HepG2 (cell line): ENCODE measurements at regions of chr9 and their contacts with region 1.

Region 1: GRCh38 chr9:122904823-122905710 is at the start of gene RC3H2:
- DNase-seq: peak; percentile 99
- ATAC-seq: peak; percentile 94
- H3K4me3 ChIP-seq: peak within 1 kb of the TSS; percentile 63 to 98 (median 95)
- H3K27ac ChIP-seq: peak within 1 kb of the TSS; percentile 90
- H3K4me1 ChIP-seq: peaks cover 19% of the 10 kb centered on the region
- H3K27me3 ChIP-seq: no peaks in the 10 kb centered on the region; a peak in 1 of 5 replicates
- CTCF ChIP-seq: no peak
- EP300 ChIP-seq: no peak; a peak in 1 of 4 replicates
- POLR2A ChIP-seq: peak; percentile 93 to 96
- RAD21 ChIP-seq: no peak
- total RNA-seq, gene RC3H2: 36.4 and 42.5 TPM in 2 replicates

Region 2: DNA sequence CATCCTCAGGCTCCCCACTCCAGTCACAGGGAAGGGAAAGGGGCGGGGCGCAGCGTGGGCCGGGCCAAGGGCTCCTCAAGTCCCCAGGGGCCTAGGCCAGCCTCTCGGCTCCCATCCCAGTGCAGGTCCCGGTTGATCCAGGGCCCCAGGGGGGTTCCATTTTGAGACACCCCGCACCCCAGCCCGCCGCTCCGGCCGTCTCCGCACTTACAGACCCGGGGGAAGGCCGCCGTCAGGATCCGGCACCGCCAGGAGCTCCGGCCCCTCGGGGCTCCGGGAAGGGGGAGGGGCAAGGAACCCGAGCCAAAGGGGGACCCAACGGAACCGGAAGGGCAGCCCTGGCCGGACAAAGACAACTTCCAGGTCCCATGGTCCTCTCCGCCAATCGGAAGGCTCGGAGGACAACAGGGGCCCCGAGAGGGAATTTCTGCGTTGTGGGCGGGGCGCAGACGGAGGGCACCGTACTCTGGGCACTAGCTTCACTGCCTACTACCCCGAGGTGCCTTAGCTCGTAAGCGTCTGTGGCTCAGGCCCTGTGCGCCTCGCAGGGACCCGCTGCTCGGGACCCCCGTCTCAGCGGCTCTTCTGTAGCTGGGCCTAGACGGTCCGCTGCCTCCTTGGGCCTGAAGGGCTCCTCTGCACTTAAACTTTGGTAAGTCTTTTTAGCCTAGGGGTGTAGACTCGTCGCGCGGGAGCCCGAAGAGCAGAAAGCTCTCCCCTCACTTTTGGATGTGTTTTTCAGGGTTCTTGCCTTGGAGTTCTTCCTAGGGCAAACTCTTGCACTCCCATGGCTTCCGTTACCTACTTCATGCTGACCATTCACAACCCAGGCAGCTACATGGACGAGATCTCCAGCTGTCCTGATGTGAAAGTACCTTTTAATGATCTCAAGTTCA is 26.4 kb after region 1 on chr9 and contains the start of gene ZBTB26:
- CTCF ChIA-PET with region 1: no interaction called
- POLR2A ChIA-PET with region 1: interaction called, 26 read pairs
- in situ Hi-C with region 1: no loop called
- intact Hi-C with region 1: loop called (anchors 1 kb)
- DNase-seq: peak; percentile 94
- ATAC-seq: peak; percentile 98
- H3K4me3 ChIP-seq: peak within 1 kb of the TSS; percentile 72 to 99 (median 85)
- H3K27ac ChIP-seq: peak within 1 kb of the TSS; percentile 87
- H3K4me1 ChIP-seq: peaks cover 43% of the 10 kb centered on the region
- H3K27me3 ChIP-seq: no peaks in the 10 kb centered on the region; a peak in 1 of 5 replicates
- CTCF ChIP-seq: no peak
- EP300 ChIP-seq: no peak
- POLR2A ChIP-seq: peak; percentile 95
- RAD21 ChIP-seq: no peak; the same call in 1 of the 2 replicates
- total RNA-seq, gene ZBTB26: 4.5 and 5.6 TPM in 2 replicates

Region 3: GRCh38 chr9:122991370-122991830 is 86.3 kb after region 1 on chr9:
- CTCF ChIA-PET with region 1: interaction called, 3 read pairs
- POLR2A ChIA-PET with region 1: no interaction called
- in situ Hi-C with region 1: no loop called
- intact Hi-C with region 1: loop called (anchors 5 kb)
- DNase-seq: peak; percentile 25
- ATAC-seq: peak; percentile 43; the same call in 1 of the 3 replicates
- H3K4me3 ChIP-seq: no peak overlapping the region
- H3K27ac ChIP-seq: no peak overlapping the region
- H3K4me1 ChIP-seq: no peaks in the 10 kb centered on the region
- H3K27me3 ChIP-seq: no peaks in the 10 kb centered on the region
- CTCF ChIP-seq: peak; percentile 59
- EP300 ChIP-seq: no peak
- POLR2A ChIP-seq: no peak
- RAD21 ChIP-seq: no peak